Mammary epithelial cell (primary cell): ENCODE measurements at regions of chr15 and their contacts with region 1.

Region 1: GRCh38 chr15:43903864-43904290 is 77.1 kb downstream of the WDR76 start:
- DNase-seq: peak; percentile 36
- H3K4me3 ChIP-seq: no peak overlapping the region
- H3K27ac ChIP-seq: no peak overlapping the region
- H3K4me1 ChIP-seq: no peaks in the 10 kb centered on the region
- H3K27me3 ChIP-seq: no peaks in the 10 kb centered on the region
- CTCF ChIP-seq: peak; percentile 67 to 84

Region 2: DNA sequence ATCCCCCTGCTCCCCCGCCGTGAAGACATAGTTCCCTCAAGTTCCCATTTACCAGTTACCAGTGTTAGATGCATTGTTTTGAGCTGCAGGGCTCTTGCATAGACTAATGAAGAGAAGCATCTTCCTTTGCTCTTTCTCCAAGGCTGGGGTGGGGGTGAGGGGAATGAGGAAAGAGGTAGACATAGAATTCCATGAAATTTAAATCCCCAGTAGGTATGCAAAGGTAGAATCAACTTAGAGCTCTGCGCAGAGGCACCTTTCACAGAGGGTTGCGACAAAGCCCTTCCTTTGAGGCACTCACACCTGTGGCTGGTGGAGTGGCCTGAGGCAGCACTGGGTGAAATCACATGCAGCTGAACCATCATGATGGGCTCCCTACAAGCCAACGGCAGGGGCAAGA is 24.3 kb after region 1 on chr15:
- CTCF ChIA-PET with region 1: no interaction called
- dilution Hi-C with region 1: no loop called
- in situ Hi-C with region 1: no loop called
- intact Hi-C with region 1: no loop called
- DNase-seq: no peak
- H3K4me3 ChIP-seq: no peak overlapping the region
- H3K27ac ChIP-seq: no peak overlapping the region
- H3K4me1 ChIP-seq: peaks cover 12% of the 10 kb centered on the region
- H3K27me3 ChIP-seq: no peaks in the 10 kb centered on the region
- CTCF ChIP-seq: no peak

Region 3: DNA sequence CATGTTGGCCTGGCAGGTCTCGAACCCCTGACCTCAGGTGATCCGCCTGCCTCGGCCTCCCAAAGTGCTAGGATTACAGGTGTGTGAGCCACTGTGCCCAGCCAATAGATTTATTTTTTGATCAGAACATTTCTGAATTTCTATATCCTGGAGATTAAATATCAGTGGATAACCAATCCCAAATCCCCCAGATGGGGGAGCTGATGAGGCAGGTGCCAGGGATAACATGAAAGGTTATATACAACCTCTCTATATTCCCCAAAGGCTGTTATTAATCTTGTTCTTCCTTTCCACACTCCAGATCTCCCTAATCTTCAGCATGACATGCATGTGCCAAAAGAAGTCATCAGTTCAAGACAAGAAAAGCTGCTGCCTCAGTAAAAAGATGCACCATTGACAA is 35.2 kb after region 1 on chr15:
- CTCF ChIA-PET with region 1: no interaction called
- dilution Hi-C with region 1: no loop called
- in situ Hi-C with region 1: no loop called
- intact Hi-C with region 1: loop called (anchors 1 kb)
- DNase-seq: no peak
- H3K4me3 ChIP-seq: no peak overlapping the region
- H3K27ac ChIP-seq: no peak overlapping the region
- H3K4me1 ChIP-seq: peaks cover 5% of the 10 kb centered on the region
- H3K27me3 ChIP-seq: no peaks in the 10 kb centered on the region
- CTCF ChIP-seq: peak; percentile 52 to 71

Region 4: GRCh38 chr15:44066316-44066740 is 162.5 kb after region 1 on chr15:
- CTCF ChIA-PET with region 1: interaction called, 6 read pairs
- dilution Hi-C with region 1: no loop called
- in situ Hi-C with region 1: loop called (anchors 5 to 25 kb)
- intact Hi-C with region 1: loop called (anchors 1 kb)
- DNase-seq: peak; percentile 65
- H3K4me3 ChIP-seq: no peak overlapping the region
- H3K27ac ChIP-seq: peak overlapping the region; percentile 31
- H3K4me1 ChIP-seq: peaks cover 9% of the 10 kb centered on the region
- H3K27me3 ChIP-seq: no peaks in the 10 kb centered on the region
- CTCF ChIP-seq: peak; percentile 72 to 80

Region 5: GRCh38 chr15:44195151-44195740 is 291.4 kb after region 1 on chr15 and contains the start of gene FRMD5:
- CTCF ChIA-PET with region 1: no interaction called
- dilution Hi-C with region 1: no loop called
- in situ Hi-C with region 1: no loop called
- intact Hi-C with region 1: loop called (anchors 2 kb)
- DNase-seq: peak; percentile 99
- H3K4me3 ChIP-seq: peak within 1 kb of the TSS; percentile 75 to 84 (median 76)
- H3K27ac ChIP-seq: peak within 1 kb of the TSS; percentile 82
- H3K4me1 ChIP-seq: peaks cover 19% of the 10 kb centered on the region
- H3K27me3 ChIP-seq: no peaks in the 10 kb centered on the region
- CTCF ChIP-seq: peak in 1 of 2 donors; percentile 51
- total RNA-seq, gene FRMD5: 12.5 to 17.5 TPM

Region 6: DNA sequence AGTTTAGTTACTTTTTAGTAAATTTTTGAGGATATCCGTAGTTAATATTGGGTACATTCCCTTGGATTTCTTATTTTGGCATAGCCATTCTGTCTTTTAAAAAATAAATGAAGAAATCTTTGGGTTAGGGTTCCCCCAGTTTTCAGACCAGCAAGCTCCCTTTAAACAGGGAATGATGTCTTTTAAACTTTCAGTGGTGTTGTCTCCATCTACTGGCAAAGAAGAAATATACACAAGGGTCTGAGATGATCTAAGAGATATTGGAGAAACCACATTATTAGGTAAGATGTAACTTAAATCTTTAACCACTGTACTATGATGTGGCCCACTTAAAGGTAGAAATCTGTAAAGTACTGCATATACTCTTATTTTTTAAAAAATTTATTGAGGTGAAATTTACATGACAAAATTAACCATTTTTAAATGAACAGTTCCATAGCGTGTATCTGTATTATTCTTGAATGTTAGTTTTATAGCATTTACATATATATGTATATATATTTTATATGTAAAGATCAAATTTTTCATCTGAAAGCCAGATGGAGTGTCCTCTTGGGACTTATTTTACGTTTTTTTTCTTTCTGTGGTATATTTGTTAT is 598.0 kb after region 1 on chr15:
- CTCF ChIA-PET with region 1: no interaction called
- dilution Hi-C with region 1: loop called (anchors 25 kb)
- in situ Hi-C with region 1: loop called in 1 of 2 experiments (anchors 25 kb)
- intact Hi-C with region 1: loop called (anchors 10 kb)
- DNase-seq: peak; percentile 32
- H3K4me3 ChIP-seq: no peak overlapping the region
- H3K27ac ChIP-seq: no peak overlapping the region
- H3K4me1 ChIP-seq: no peaks in the 10 kb centered on the region
- H3K27me3 ChIP-seq: no peaks in the 10 kb centered on the region
- CTCF ChIP-seq: peak; percentile 54 to 63